Body of pancreas (tissue), 4 donors: ENCODE measurements at regions of chr5 and their contacts with region 1.

Region 1: GRCh38 chr5:126536874-126537273 is 58.1 kb downstream of the ALDH7A1 start:
- DNase-seq: no peak
- ATAC-seq: no peak
- H3K4me3 ChIP-seq: no peak overlapping the region
- H3K27ac ChIP-seq: no peak overlapping the region
- H3K4me1 ChIP-seq: peaks cover 8% of the 10 kb centered on the region
- H3K27me3 ChIP-seq: no peaks in the 10 kb centered on the region
- CTCF ChIP-seq: no peak
- POLR2A ChIP-seq: no peak

Region 2: GRCh38 chr5:126044111-126044668 is 492.7 kb before region 1 on chr5:
- intact Hi-C with region 1: no loop called
- DNase-seq: peak; percentile 23 to 68 (median 56)
- ATAC-seq: peak; percentile 87
- H3K4me3 ChIP-seq: no peak overlapping the region
- H3K27ac ChIP-seq: peak overlapping the region in 1 of 4 donors; percentile 14
- H3K4me1 ChIP-seq: peaks cover 11% of the 10 kb centered on the region
- H3K27me3 ChIP-seq: no peaks in the 10 kb centered on the region
- CTCF ChIP-seq: no peak
- POLR2A ChIP-seq: no peak

Region 3: DNA sequence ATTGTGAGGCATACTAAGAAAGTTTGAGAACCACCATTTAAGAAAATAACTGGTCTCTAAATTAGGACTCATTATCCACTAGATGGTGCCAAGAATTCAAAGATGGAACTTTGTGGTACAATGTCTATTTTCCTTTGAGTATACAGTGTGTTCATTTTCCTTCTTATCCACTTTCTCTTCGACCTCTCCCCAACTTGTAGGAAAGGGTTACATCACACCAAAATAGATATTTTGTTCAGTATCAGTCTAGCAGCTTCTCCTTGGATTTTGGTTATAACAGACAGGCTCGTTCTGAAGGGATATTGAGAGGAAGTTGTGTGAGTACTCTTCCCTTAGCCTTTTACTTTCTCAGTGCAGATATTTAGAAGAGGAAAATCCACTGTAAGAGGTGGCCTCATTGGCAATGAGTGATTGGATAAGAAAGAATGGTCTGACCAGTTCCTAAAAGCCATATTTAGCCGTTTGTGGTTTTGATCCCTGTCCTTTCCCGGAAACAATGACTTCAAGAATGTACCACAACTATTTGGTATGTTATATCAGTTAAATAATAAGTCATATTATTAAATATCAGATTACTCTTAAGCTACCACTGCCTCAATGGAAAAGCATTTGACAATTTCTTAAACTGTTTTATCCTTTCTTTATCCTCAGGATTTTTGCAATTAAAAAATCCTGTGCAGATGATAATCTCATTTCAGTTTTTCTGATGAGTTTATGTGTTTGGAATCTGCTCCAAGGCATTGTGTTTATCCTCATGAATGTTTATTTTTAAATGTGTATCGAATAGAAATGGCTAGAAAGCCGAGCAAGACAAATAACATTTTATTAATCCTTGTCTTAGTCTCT is 182.6 kb before region 1 on chr5:
- intact Hi-C with region 1: loop called (anchors 5 kb)
- DNase-seq: no peak
- ATAC-seq: peak; percentile 79
- H3K4me3 ChIP-seq: no peak overlapping the region
- H3K27ac ChIP-seq: peak overlapping the region in 2 of 4 donors; percentile 20 to 49
- H3K4me1 ChIP-seq: no peaks in the 10 kb centered on the region
- H3K27me3 ChIP-seq: no peaks in the 10 kb centered on the region
- CTCF ChIP-seq: peak; percentile 30 to 79 (median 72)
- POLR2A ChIP-seq: no peak